ENCODE measurements at regions of chr6 and their contacts with region 1.

Region 1: DNA sequence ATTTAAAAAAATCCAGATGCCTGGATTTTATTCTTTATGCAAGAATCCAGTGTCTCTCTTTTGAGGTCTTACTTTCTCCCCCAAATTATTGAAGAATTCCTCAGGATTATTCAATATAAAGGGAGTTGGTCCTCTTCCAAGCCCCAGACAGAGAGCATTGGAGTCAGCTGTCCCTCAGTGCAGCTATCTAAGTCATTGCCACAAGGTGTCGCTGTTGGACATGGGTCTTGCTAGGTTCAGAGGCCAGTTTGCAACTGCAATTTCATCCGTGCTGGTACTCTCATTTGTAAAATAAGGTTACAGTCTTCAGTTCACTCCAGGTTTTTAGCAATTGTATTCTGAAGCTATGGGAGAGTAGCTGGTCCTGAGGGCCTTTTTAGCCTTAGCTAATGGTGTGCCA is 27.8 kb downstream of the CCN2 start:
- DNase-seq: peak; percentile 45 to 59
- H3K4me3 ChIP-seq: no peak overlapping the region
- H3K27ac ChIP-seq: no peak overlapping the region
- H3K4me1 ChIP-seq: no peaks in the 10 kb centered on the region; the same call in 1 of the 2 replicates
- H3K27me3 ChIP-seq: no peaks in the 10 kb centered on the region
- CTCF ChIP-seq: peak; percentile 97

Region 2: GRCh38 chr6:131877999-131878789 is 45.2 kb before region 1 on chr6:
- CTCF ChIA-PET with region 1: no interaction called
- POLR2A ChIA-PET with region 1: no interaction called
- intact Hi-C with region 1: no loop called
- DNase-seq: no peak
- H3K4me3 ChIP-seq: no peak overlapping the region
- H3K27ac ChIP-seq: no peak overlapping the region
- H3K4me1 ChIP-seq: no peaks in the 10 kb centered on the region
- H3K27me3 ChIP-seq: no peaks in the 10 kb centered on the region
- CTCF ChIP-seq: no peak

Region 3: GRCh38 chr6:132161283-132161682 is 237.9 kb after region 1 on chr6:
- CTCF ChIA-PET with region 1: no interaction called
- POLR2A ChIA-PET with region 1: no interaction called
- intact Hi-C with region 1: loop called (anchors 1 kb)
- DNase-seq: peak in 1 of 2 experiments; percentile 1
- H3K4me3 ChIP-seq: no peak overlapping the region
- H3K27ac ChIP-seq: no peak overlapping the region
- H3K4me1 ChIP-seq: no peaks in the 10 kb centered on the region
- H3K27me3 ChIP-seq: no peaks in the 10 kb centered on the region
- CTCF ChIP-seq: peak; percentile 62

Region 4: GRCh38 chr6:132218059-132218696 is 294.8 kb after region 1 on chr6:
- CTCF ChIA-PET with region 1: interaction called, 4 read pairs
- POLR2A ChIA-PET with region 1: no interaction called
- intact Hi-C with region 1: loop called (anchors 1 kb)
- DNase-seq: no peak
- H3K4me3 ChIP-seq: no peak overlapping the region
- H3K27ac ChIP-seq: no peak overlapping the region
- H3K4me1 ChIP-seq: no peaks in the 10 kb centered on the region
- H3K27me3 ChIP-seq: no peaks in the 10 kb centered on the region
- CTCF ChIP-seq: peak; percentile 74

Region 5: GRCh38 chr6:132259070-132259469 is 335.7 kb after region 1 on chr6:
- CTCF ChIA-PET with region 1: interaction called, 3 read pairs
- POLR2A ChIA-PET with region 1: no interaction called
- intact Hi-C with region 1: loop called (anchors 1 kb)
- DNase-seq: peak in 1 of 2 experiments; percentile 28
- H3K4me3 ChIP-seq: no peak overlapping the region
- H3K27ac ChIP-seq: no peak overlapping the region
- H3K4me1 ChIP-seq: no peaks in the 10 kb centered on the region
- H3K27me3 ChIP-seq: no peaks in the 10 kb centered on the region
- CTCF ChIP-seq: peak; percentile 67

Region 6: GRCh38 chr6:132279592-132280139 is 356.3 kb after region 1 on chr6:
- CTCF ChIA-PET with region 1: interaction called, 6 read pairs
- POLR2A ChIA-PET with region 1: no interaction called
- intact Hi-C with region 1: loop called (anchors 1 kb)
- DNase-seq: peak; percentile 55 to 67
- H3K4me3 ChIP-seq: peak overlapping the region; percentile 56
- H3K27ac ChIP-seq: no peak overlapping the region
- H3K4me1 ChIP-seq: 0 out of 2 replicates have a peak, but pooled peaks cover 3% of the 10 kb centered on the region
- H3K27me3 ChIP-seq: no peaks in the 10 kb centered on the region
- CTCF ChIP-seq: peak; percentile 100

Region 7: GRCh38 chr6:132300323-132300949 is 377.1 kb after region 1 on chr6:
- CTCF ChIA-PET with region 1: interaction called, 3 read pairs
- POLR2A ChIA-PET with region 1: no interaction called
- intact Hi-C with region 1: loop called (anchors 1 kb)
- DNase-seq: peak; percentile 18 to 44
- H3K4me3 ChIP-seq: no peak overlapping the region
- H3K27ac ChIP-seq: no peak overlapping the region
- H3K4me1 ChIP-seq: no peaks in the 10 kb centered on the region
- H3K27me3 ChIP-seq: no peaks in the 10 kb centered on the region
- CTCF ChIP-seq: peak; percentile 90

Region 8: GRCh38 chr6:132483779-132484679 is 560.7 kb after region 1 on chr6:
- CTCF ChIA-PET with region 1: interaction called, 14 read pairs
- POLR2A ChIA-PET with region 1: no interaction called
- intact Hi-C with region 1: loop called (anchors 2 kb)
- DNase-seq: peak; percentile 20 to 53
- H3K4me3 ChIP-seq: no peak overlapping the region
- H3K27ac ChIP-seq: no peak overlapping the region
- H3K4me1 ChIP-seq: no peaks in the 10 kb centered on the region
- H3K27me3 ChIP-seq: no peaks in the 10 kb centered on the region
- CTCF ChIP-seq: peak; percentile 96

Region 9: GRCh38 chr6:133697666-133698065 is 1774.3 kb after region 1 on chr6:
- CTCF ChIA-PET with region 1: no interaction called
- POLR2A ChIA-PET with region 1: no interaction called
- intact Hi-C with region 1: no loop called
- DNase-seq: no peak
- H3K4me3 ChIP-seq: no peak overlapping the region
- H3K27ac ChIP-seq: no peak overlapping the region
- H3K4me1 ChIP-seq: no peaks in the 10 kb centered on the region
- H3K27me3 ChIP-seq: no peaks in the 10 kb centered on the region
- CTCF ChIP-seq: no peak